HAP-1 (cell line): ENCODE measurements at regions of chr13 and their contacts with region 1.

Region 1: DNA sequence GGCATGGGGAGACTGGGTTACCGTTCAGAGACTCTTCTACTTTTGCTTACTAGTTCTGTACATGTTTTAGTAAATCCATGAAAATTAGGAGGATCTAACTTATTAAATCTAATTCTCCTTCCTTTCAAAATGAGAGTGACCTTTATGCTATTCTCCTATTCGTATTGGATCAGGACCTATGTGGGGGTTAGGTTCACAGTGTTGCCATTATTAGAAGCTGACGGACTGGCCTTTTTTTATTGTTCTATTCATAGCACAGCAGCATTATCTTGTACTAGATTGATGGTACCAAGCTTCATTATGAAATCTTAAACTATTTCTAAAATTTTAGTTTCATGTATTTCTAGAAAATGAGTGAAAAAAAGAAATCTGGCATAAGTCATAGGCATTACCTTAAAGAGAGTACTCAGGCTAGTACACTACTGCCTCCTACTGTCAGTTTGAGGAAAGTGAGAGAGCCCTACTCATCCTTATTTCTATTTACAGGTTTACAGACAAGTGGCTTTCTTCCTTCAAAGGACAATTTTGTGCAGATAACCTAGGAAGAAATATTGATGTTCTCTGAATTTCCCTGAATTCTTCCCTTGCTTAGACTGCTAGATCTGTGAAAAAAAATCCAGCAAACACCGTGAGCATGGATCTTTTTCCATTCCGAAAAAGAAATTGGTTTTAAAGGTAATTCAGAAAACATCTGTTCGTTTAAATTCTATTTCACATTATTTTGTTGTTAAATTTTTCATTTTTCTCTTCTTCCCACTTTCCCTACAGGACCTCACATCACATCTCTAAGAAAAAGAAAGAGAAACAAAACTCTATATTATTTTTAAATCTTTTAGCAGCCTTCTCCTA is 485.5 kb downstream of the DIAPH3 start:
- DNase-seq: peak; percentile 34 to 75
- H3K4me3 ChIP-seq: no peak overlapping the region
- H3K4me1 ChIP-seq: peaks cover 5% of the 10 kb centered on the region; the same call in 1 of the 2 replicates
- H3K27me3 ChIP-seq: no peaks in the 10 kb centered on the region

Region 2: GRCh38 chr13:59391696-59392095 is 286.5 kb before region 1 on chr13:
- in situ Hi-C with region 1: loop called (anchors 10 kb)
- DNase-seq: peak; percentile 75 to 79
- H3K4me3 ChIP-seq: no peak overlapping the region
- H3K4me1 ChIP-seq: peaks cover 4% of the 10 kb centered on the region; the same call in 1 of the 2 replicates
- H3K27me3 ChIP-seq: no peaks in the 10 kb centered on the region

Region 3: GRCh38 chr13:59906413-59907049 is 228.3 kb after region 1 on chr13:
- in situ Hi-C with region 1: loop called (anchors 10 kb)
- DNase-seq: peak; percentile 15 to 36
- H3K4me3 ChIP-seq: no peak overlapping the region
- H3K4me1 ChIP-seq: peaks cover 10% of the 10 kb centered on the region
- H3K27me3 ChIP-seq: no peaks in the 10 kb centered on the region